ENCODE measurements at regions of chr17 and their contacts with region 1.

Region 1: DNA sequence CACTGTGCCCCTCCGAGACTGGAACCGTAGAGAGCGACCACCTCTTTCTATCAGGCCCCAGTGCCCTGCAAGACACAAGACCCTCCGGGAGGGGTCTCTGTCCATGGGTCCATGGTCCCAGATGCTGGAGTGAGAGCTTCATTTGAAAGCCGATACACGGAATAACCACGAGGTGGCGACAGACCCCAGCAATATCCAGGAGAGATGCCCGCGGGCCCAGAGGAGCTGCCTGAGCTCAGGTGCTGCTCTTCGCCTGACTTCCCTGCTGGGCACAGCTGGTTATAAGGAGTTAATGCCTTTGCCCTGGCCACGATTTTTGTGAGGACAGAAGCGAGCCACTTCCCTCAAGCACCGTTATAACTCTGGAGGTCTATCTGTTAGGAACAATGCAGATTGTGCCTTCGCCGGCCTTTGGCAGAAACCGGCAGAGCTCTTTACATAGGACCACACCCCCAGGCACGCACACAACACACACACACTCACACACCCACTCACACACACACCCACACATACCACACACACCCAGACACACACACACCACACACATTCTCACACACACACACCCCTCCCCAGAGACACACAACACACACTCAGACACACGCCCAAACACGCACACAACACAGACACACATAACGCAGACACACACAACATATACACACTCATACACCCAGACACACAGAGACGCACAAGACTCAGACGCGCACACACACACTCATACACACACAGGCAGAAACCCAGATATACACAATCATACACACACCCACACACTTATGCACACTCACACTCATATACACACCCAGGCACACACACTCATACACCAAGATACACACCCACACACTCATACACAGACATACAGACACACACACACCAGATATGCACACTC is 436.4 kb downstream of the SOX9 start:
- ATAC-seq: peak; percentile 51 to 90 (median 64)
- H3K4me3 ChIP-seq: no peak overlapping the region
- H3K27ac ChIP-seq: no peak overlapping the region
- H3K4me1 ChIP-seq: peaks cover 7 to 11% of the 10 kb centered on the region in 2 donors

Region 2: DNA sequence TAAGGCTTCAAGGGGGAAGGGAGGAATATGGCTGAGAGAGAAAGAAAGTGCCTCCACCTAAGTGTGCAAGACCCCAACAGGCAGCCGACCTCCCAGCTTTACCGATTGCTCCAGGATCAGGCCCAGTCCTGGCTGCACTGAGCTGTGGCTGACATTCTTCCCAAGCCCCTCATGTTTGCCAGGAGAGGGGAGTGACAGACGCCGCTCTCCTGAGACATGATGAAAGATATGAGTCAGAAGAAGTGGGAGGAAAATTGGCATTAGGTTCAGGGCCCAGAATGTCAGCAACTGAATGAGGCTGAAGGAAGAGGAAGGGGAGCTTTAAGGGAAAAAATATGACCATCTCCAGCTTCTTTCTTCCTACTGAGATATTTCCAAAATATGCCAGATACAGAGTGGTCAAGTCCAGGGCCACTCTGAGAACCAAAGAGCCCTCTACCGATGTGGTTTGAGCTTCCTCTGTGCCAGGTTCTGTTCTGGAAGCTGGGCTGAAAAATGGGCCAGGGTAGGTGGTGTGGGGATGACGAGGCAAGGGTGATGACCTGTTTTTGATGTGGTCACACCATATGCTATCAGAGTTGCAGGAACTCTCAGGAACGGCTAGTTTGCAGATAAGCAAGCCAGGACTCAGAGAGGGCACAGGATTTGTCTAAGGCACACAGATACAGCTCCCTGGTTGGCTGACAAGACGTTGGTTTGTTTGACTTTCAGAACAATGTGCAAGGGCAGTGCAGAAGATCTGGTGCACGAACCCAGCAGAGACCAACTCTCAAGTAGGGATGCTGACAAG is 259.7 kb before region 1 on chr17:
- in situ Hi-C with region 1: no loop called
- ATAC-seq: peak in 2 of 8 experiments; percentile 48 to 57
- H3K4me3 ChIP-seq: no peak overlapping the region
- H3K27ac ChIP-seq: no peak overlapping the region
- H3K4me1 ChIP-seq: peaks cover 16% of the 10 kb centered on the region in 2 donors

Region 3: DNA sequence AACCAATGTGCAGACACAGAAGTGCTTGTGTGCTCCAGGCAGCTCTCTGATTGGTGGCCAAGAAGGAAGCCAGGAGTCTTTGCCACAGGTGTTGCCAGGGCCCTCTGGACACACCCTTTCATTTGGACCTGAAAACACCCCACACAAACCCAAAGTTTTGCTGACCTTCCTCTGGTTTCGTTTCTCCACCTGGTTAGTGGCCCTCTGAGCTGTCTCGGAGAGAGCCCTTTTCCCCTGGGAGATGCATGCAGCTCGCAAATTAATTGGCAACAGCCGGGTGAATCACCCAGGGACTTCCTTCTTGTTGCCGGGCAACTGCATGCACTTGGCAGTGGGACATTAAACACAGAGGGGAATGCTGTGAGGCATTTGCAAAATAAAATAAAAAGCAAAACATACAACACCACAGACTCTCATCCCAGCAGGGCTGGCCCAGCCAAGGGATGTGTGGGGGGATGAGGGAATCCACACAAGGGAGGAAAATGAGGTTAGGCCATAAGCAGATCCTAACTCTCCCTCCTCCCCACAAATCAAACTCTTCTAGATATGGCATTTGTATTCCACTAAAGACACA is 149.8 kb before region 1 on chr17:
- in situ Hi-C with region 1: no loop called
- ATAC-seq: peak; percentile 90 to 97 (median 94)
- H3K4me3 ChIP-seq: no peak overlapping the region
- H3K27ac ChIP-seq: peak overlapping the region in 1 of 2 donors; percentile 23
- H3K4me1 ChIP-seq: peaks cover 40 to 42% of the 10 kb centered on the region in 2 donors

Region 4: GRCh38 chr17:72702136-72702735 is 145.1 kb after region 1 on chr17:
- in situ Hi-C with region 1: loop called in 1 of 9 experiments (anchors 10 kb)
- ATAC-seq: no peak
- H3K4me3 ChIP-seq: no peak overlapping the region
- H3K27ac ChIP-seq: no peak overlapping the region
- H3K4me1 ChIP-seq: peaks cover 0 to 5% of the 10 kb centered on the region in 2 donors

Region 5: GRCh38 chr17:73192894-73193701 is 635.9 kb after region 1 on chr17 and contains the start of gene COG1:
- in situ Hi-C with region 1: loop called in 5 of 9 experiments (anchors 25 kb)
- ATAC-seq: peak; percentile 72 to 87 (median 82)
- H3K4me3 ChIP-seq: peak within 1 kb of the TSS; percentile 61 to 100 (median 95)
- H3K27ac ChIP-seq: peak within 1 kb of the TSS; percentile 91 to 97
- H3K4me1 ChIP-seq: peaks cover 3 to 9% of the 10 kb centered on the region in 2 donors
- total RNA-seq, gene COG1: 25.7 to 44.0 (median 36.0) TPM